IMR-90 (cell line): ENCODE measurements at regions of chr5 and their contacts with region 1.

Region 1: GRCh38 chr5:38809388-38810359 is 36.1 kb upstream of the OSMR start:
- DNase-seq: peak; percentile 92
- ATAC-seq: peak; percentile 74
- H3K4me3 ChIP-seq: no peak overlapping the region
- H3K27ac ChIP-seq: peak overlapping the region; percentile 65
- H3K4me1 ChIP-seq: peaks cover 20% of the 10 kb centered on the region
- H3K27me3 ChIP-seq: no peaks in the 10 kb centered on the region
- CTCF ChIP-seq: peak; percentile 99
- POLR2A ChIP-seq: peak; percentile 68
- RAD21 ChIP-seq: peak; percentile 100

Region 2: DNA sequence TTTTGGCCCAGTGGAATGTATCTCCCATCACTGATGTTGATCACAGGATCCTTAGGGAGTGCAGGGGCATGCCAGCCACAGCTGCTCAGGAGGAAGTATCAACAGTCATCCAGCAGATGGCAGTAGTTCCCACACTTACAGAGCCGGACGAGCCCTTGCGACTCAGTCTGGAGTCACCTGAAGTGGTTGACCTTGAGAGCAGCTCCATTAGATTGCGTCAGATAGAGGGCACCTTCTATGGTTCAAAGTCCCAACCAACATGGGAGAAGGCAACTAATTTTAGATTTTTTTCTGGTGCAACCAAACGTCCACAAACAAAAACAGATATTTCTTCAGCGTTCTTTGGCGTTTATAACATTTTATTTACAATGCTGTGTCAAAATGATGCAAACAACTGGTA is 426.8 kb before region 1 on chr5:
- CTCF ChIA-PET with region 1: interaction called, 4 read pairs
- POLR2A ChIA-PET with region 1: no interaction called
- dilution Hi-C with region 1: no loop called
- in situ Hi-C with region 1: no loop called
- intact Hi-C with region 1: loop called (anchors 1 kb)
- DNase-seq: peak; percentile 68
- ATAC-seq: peak; percentile 99
- H3K4me3 ChIP-seq: no peak overlapping the region
- H3K27ac ChIP-seq: no peak overlapping the region
- H3K4me1 ChIP-seq: no peaks in the 10 kb centered on the region; the same call in 1 of the 2 replicates
- H3K27me3 ChIP-seq: peaks cover 24% of the 10 kb centered on the region
- CTCF ChIP-seq: peak; percentile 70
- POLR2A ChIP-seq: no peak
- RAD21 ChIP-seq: peak; percentile 71

Region 3: DNA sequence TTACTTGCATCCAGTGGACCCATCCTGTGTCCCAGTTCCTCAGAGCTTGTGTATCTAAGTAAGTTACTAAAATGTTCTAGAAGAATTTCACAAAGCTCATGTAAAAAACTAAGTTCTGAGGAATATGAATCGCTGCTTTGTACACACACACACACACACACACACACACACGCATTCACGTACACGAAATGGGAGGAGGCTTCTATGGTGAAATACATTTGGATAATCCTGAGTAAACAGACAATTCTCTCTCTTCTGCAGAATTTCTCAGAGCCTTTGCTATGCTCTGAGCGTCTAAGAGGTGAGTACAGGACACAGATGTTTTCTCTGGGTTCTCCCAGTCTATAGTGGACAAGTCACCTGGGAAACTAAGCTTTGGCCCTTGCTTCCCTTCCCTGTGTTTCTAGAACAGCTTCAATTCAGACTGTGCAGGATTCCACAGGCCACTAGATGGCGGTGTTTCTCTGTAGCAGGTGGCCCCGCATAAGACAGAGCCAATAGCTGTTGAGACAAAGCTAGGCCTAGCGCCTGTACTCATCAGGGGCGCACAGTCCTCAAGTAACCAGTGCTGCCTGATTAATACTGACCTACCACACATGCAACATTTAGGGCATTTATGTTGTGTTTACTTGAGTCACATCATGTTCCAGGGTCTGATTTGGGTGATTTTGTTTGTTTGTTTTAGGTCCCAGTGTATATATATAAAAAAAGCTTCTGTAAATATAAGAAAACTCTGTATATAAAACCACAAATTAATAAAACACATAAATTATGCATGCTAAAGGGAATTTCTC is 368.0 kb before region 1 on chr5:
- CTCF ChIA-PET with region 1: interaction called, 71 read pairs
- POLR2A ChIA-PET with region 1: interaction called, 4 read pairs
- dilution Hi-C with region 1: no loop called
- in situ Hi-C with region 1: loop called (anchors 5 kb)
- intact Hi-C with region 1: loop called (anchors 1 kb)
- DNase-seq: peak; percentile 91
- ATAC-seq: peak; percentile 100
- H3K4me3 ChIP-seq: no peak overlapping the region
- H3K27ac ChIP-seq: no peak overlapping the region
- H3K4me1 ChIP-seq: peaks cover 4% of the 10 kb centered on the region
- H3K27me3 ChIP-seq: peaks cover 10% of the 10 kb centered on the region
- CTCF ChIP-seq: peak; percentile 99
- POLR2A ChIP-seq: peak; percentile 58
- RAD21 ChIP-seq: peak; percentile 100

Region 4: DNA sequence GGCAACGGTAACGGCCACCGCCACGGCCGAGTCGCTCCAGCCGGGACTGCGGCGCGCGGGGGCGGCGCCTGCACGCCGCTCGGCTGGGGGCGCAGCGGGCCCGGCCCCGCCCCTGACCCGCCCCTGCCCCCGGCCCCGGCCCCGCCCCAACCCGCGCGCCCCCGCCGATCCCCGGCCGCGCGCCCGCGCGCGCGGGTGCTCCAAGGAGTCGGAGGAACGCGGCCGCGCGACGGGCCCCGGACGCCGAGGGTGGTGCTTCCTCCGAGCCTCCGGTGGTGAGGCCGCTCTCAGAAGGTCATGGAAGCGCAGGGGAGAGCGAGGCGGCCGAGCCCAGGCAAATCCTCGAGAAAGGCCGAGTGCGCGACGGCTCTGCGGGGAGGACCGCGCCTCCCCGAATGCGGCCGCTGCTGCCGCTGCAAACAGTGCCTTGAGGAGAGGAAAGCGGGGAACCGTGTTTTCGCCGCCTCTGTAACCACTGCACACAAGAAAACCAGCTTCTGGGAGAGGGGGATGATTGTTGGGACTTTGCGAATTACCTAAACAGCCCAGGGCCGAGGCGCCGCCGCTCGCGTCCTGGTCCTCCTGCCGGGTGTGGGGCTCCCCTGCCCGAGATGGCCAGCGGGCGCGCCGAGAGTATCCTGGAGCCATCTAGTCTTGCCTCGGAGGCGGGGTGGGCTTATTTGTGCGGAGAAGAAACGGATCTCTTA is 252.9 kb before region 1 on chr5 and contains the start of gene LIFR:
- CTCF ChIA-PET with region 1: interaction called, 4 read pairs
- POLR2A ChIA-PET with region 1: no interaction called
- dilution Hi-C with region 1: no loop called
- in situ Hi-C with region 1: no loop called
- intact Hi-C with region 1: loop called (anchors 1 kb)
- DNase-seq: peak; percentile 74
- ATAC-seq: peak; percentile 93
- H3K4me3 ChIP-seq: peak within 1 kb of the TSS; percentile 92
- H3K27ac ChIP-seq: peak within 1 kb of the TSS; percentile 97
- H3K4me1 ChIP-seq: no peaks in the 10 kb centered on the region
- H3K27me3 ChIP-seq: peaks cover under 1% of the 10 kb centered on the region; the same call in 1 of the 2 replicates
- CTCF ChIP-seq: no peak
- POLR2A ChIP-seq: no peak
- RAD21 ChIP-seq: no peak
- total RNA-seq, gene LIFR: 10.4 and 13.9 TPM in 2 replicates

Region 5: GRCh38 chr5:38719916-38720315 is 89.8 kb before region 1 on chr5:
- CTCF ChIA-PET with region 1: no interaction called
- POLR2A ChIA-PET with region 1: no interaction called
- dilution Hi-C with region 1: no loop called
- in situ Hi-C with region 1: no loop called
- intact Hi-C with region 1: loop called (anchors 5 kb)
- DNase-seq: peak; percentile 89
- ATAC-seq: peak; percentile 94
- H3K4me3 ChIP-seq: no peak overlapping the region
- H3K27ac ChIP-seq: no peak overlapping the region
- H3K4me1 ChIP-seq: peaks cover 17% of the 10 kb centered on the region
- H3K27me3 ChIP-seq: no peaks in the 10 kb centered on the region
- CTCF ChIP-seq: no peak
- POLR2A ChIP-seq: no peak
- RAD21 ChIP-seq: no peak